Vagina (tissue), 2 donors: ENCODE measurements at regions of chr15 and their contacts with region 1.

Region 1: GRCh38 chr15:40044717-40045571 is 6.0 kb upstream of the SRP14 start:
- DNase-seq: peak in 1 of 2 donors; percentile 89
- H3K4me3 ChIP-seq: no peak overlapping the region
- H3K27ac ChIP-seq: peak overlapping the region; percentile 77
- H3K4me1 ChIP-seq: peaks cover 46% of the 10 kb centered on the region
- H3K27me3 ChIP-seq: no peaks in the 10 kb centered on the region
- CTCF ChIP-seq: peak; percentile 74 to 88 (median 82)
- POLR2A ChIP-seq: no peak

Region 2: DNA sequence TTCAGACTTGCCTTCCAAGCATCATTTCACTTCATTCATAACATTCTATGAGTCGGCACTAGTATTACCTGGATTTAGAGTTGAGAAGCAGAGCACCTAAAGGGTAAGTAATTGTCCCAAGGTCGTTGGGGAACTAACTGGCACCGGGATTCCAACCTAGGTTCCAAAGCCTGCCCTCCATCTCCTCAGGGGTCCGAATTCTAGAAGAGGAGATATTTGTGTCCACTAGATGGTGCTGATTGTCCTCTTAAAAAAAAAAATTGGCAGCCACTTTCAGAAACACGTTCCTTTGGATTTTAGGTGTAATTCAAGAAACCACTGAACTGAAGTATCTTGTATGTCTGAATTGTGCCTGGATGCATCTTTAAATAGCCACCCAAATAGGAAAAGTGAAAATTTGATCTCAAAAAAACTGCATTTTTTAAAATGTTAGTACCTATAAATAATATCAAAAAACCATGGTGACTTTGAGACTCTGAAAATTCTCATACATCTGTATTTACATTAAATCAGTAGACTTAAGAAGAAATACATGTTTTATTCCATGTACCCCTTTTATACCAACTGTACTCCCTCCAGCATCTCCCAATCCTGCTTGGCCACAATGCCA is 258.4 kb before region 1 on chr15:
- intact Hi-C with region 1: loop called (anchors 5 kb)
- DNase-seq: no peak
- H3K4me3 ChIP-seq: no peak overlapping the region
- H3K27ac ChIP-seq: peak overlapping the region; percentile 25
- H3K4me1 ChIP-seq: peaks cover 26% of the 10 kb centered on the region
- H3K27me3 ChIP-seq: no peaks in the 10 kb centered on the region
- CTCF ChIP-seq: peak; percentile 35 to 66 (median 49)
- POLR2A ChIP-seq: no peak

Region 3: GRCh38 chr15:40098489-40099261 is 53.7 kb after region 1 on chr15:
- intact Hi-C with region 1: loop called (anchors 5 kb)
- DNase-seq: peak in 1 of 2 donors; percentile 86
- H3K4me3 ChIP-seq: peak overlapping the region in 1 of 2 donors; percentile 26
- H3K27ac ChIP-seq: peak overlapping the region; percentile 96
- H3K4me1 ChIP-seq: peaks cover 100% of the 10 kb centered on the region
- H3K27me3 ChIP-seq: no peaks in the 10 kb centered on the region
- CTCF ChIP-seq: no peak
- POLR2A ChIP-seq: no peak

Region 4: DNA sequence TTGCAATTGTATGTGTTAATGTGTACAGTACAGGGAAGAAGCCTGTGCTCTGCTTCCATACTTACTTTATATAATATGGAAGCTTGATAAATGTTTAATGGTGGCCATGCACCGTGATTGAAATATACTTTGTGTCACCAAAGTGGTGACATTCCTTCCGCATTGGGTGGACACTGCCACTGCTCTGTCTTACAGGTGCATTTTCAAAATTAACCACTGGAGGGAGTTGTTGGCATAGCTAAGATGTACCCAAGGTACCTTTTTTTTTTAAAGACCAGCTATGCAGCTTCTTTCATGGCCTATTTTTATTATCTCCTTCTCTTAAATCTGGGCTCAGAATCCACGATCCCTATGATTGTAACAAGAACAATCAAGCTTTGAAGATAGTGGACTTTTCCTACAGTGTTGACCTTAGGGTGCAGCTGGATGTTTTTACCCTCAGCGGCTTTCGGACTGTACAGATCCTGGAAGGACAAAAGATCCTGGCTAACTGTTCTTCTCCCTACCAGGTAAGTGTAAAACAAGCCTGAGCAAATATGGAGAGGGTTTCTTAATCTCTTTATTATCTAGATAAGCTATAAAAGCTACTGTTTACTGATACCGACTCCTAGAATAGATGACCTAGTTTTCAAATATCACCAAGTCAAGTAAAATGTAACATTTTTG is 172.3 kb after region 1 on chr15:
- intact Hi-C with region 1: loop called (anchors 5 kb)
- DNase-seq: no peak
- H3K4me3 ChIP-seq: no peak overlapping the region
- H3K27ac ChIP-seq: no peak overlapping the region
- H3K4me1 ChIP-seq: no peaks in the 10 kb centered on the region
- H3K27me3 ChIP-seq: no peaks in the 10 kb centered on the region
- CTCF ChIP-seq: peak; percentile 84 to 92 (median 90)
- POLR2A ChIP-seq: no peak

Region 5: GRCh38 chr15:40274350-40275274 is 229.7 kb after region 1 on chr15:
- intact Hi-C with region 1: loop called (anchors 5 kb)
- DNase-seq: no peak
- H3K4me3 ChIP-seq: no peak overlapping the region
- H3K27ac ChIP-seq: no peak overlapping the region
- H3K4me1 ChIP-seq: peaks cover 3% of the 10 kb centered on the region
- H3K27me3 ChIP-seq: no peaks in the 10 kb centered on the region
- CTCF ChIP-seq: peak; percentile 100
- POLR2A ChIP-seq: no peak